OCI-LY7 (cell line): ENCODE measurements at regions of chr17 and their contacts with region 1.

Region 1: DNA sequence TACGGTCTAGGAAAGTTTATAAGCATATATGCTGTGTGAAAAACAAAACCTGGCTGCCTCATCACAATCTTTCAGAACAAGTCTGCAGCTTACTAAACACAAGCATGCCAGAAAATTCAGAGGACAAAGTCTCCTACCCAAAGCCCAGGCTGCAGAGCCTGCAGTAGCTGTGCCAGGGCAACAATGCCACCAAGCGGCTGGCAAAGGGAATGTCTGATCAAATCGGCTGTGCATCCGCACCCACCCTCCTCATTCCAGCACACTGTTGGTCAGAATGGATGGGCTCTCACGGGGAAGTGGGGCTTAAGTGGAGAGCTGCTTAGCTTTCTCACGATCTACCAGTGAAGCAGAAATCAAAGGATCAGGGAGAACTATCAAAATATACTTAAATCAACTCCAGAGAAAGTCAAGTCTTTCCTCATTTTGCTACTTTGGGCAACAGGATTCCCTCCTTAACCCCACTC is 73.5 kb downstream of the CYTH1 start:
- DNase-seq: peak; percentile 90
- H3K4me3 ChIP-seq: peak overlapping the region; percentile 41
- H3K27ac ChIP-seq: peak overlapping the region; percentile 90
- H3K4me1 ChIP-seq: peaks cover 84% of the 10 kb centered on the region
- CTCF ChIP-seq: peak; percentile 100

Region 2: GRCh38 chr17:78360371-78361224 is 347.9 kb before region 1 on chr17:
- CTCF ChIA-PET with region 1: no interaction called
- POLR2A ChIA-PET with region 1: no interaction called
- intact Hi-C with region 1: loop called (anchors 10 kb)
- DNase-seq: peak; percentile 87
- H3K4me3 ChIP-seq: no peak overlapping the region
- H3K27ac ChIP-seq: no peak overlapping the region
- H3K4me1 ChIP-seq: peaks cover 24% of the 10 kb centered on the region
- CTCF ChIP-seq: peak; percentile 99

Region 3: GRCh38 chr17:78573956-78574355 is 134.6 kb before region 1 on chr17:
- CTCF ChIA-PET with region 1: no interaction called
- POLR2A ChIA-PET with region 1: no interaction called
- intact Hi-C with region 1: loop called (anchors 5 kb)
- DNase-seq: peak; percentile 60
- H3K4me3 ChIP-seq: no peak overlapping the region
- H3K27ac ChIP-seq: no peak overlapping the region
- H3K4me1 ChIP-seq: peaks cover 15% of the 10 kb centered on the region
- CTCF ChIP-seq: peak; percentile 66

Region 4: GRCh38 chr17:78634154-78634553 is 74.4 kb before region 1 on chr17:
- CTCF ChIA-PET with region 1: no interaction called
- POLR2A ChIA-PET with region 1: no interaction called
- intact Hi-C with region 1: loop called (anchors 5 kb)
- DNase-seq: no peak
- H3K4me3 ChIP-seq: no peak overlapping the region
- H3K27ac ChIP-seq: no peak overlapping the region
- H3K4me1 ChIP-seq: peaks cover 29% of the 10 kb centered on the region
- CTCF ChIP-seq: no peak

Region 5: DNA sequence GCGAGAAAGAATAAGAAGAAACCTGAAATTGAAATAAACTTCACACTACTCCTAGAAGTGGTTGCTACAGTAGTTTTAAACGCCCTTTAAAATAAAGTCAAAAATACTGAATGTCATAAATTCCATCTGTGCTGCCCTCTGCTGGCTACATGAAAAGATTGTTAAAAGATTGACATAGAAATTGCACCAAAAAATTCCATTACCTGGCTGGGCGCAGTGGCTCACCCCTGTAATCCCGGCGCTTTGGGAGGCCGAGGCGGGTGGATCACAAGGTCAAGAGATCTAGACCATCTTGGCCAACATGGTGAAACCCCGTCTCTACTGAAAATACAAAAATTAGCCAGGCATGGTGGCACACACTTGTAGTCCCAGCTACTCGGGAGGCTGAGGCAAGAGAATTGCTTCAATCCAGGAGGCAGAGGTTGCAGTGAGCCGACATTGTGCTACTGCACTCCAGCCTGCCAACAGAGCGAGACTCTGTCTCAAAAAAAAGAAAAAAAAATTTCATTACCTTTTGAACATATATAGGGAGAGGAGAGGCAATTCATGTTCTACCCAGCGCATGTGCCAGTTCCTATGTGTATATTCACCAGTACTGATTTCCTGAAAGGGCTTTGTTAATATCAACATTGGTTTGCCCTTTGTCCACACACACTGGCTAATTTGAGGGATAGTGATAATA is 37.0 kb after region 1 on chr17:
- CTCF ChIA-PET with region 1: interaction called, 5 read pairs
- POLR2A ChIA-PET with region 1: interaction called, 127 read pairs
- intact Hi-C with region 1: loop called (anchors 2 kb)
- DNase-seq: peak; percentile 70
- H3K4me3 ChIP-seq: no peak overlapping the region
- H3K27ac ChIP-seq: no peak overlapping the region
- H3K4me1 ChIP-seq: peaks cover 100% of the 10 kb centered on the region
- CTCF ChIP-seq: peak; percentile 92

Region 6: DNA sequence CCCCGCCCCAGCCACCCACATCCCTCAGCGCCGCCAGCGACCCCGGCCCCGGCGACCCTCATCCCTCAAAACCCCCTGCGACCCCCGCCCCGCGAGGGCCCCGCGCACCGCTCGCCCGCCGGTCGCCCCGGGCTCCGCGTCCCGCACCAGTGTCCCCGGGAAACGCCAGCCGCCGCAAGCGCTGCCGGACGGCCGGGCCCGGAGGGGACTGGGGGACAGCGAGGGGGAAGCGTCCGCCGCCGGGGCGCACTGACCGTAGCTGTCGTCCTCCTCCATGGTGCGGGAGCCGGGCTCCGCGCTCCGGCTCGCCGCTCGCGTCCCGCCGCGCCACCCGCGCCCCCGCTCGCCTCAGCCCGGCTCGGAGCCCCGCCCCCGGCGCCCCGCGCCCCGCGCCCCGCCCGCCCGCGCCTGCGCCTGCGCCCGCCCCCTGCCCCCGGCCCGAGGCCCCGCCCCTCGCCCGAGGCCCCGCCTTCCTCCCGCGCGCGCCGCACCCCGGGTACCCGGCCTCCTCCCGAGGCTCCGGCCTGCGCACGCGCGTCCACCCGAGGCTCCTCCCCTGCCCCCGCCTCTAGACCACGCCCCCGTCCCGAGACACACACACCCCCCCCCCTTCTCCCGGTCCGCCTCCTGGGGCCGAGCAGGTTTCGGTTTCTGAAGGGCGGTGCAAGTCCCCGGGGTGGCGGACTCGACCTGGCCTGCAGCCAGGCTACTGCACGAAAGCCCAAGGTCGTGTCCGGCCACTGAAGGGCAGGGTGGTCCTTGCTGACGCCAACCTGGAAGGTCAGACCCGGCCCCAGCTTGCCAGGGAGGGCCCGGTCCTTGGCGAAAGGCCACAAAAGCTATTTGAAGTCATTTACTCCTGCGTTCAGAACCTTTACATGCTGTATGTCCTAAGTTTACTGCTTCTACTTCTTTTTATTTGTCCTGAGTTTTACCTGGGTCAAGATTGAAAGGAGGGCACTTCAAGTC is 73.7 kb after region 1 on chr17 and contains the start of gene CYTH1:
- CTCF ChIA-PET with region 1: no interaction called
- POLR2A ChIA-PET with region 1: interaction called, 3 read pairs
- intact Hi-C with region 1: loop called (anchors 2 kb)
- DNase-seq: peak; percentile 94
- H3K4me3 ChIP-seq: peak within 1 kb of the TSS; percentile 91
- H3K27ac ChIP-seq: peak within 1 kb of the TSS; percentile 85
- H3K4me1 ChIP-seq: peaks cover 37% of the 10 kb centered on the region
- CTCF ChIP-seq: no peak
- total RNA-seq, gene CYTH1: 73.0 and 88.1 TPM in 2 replicates